GM18951 (cell line): ENCODE measurements at regions of chr5 and their contacts with region 1.

Region 1: DNA sequence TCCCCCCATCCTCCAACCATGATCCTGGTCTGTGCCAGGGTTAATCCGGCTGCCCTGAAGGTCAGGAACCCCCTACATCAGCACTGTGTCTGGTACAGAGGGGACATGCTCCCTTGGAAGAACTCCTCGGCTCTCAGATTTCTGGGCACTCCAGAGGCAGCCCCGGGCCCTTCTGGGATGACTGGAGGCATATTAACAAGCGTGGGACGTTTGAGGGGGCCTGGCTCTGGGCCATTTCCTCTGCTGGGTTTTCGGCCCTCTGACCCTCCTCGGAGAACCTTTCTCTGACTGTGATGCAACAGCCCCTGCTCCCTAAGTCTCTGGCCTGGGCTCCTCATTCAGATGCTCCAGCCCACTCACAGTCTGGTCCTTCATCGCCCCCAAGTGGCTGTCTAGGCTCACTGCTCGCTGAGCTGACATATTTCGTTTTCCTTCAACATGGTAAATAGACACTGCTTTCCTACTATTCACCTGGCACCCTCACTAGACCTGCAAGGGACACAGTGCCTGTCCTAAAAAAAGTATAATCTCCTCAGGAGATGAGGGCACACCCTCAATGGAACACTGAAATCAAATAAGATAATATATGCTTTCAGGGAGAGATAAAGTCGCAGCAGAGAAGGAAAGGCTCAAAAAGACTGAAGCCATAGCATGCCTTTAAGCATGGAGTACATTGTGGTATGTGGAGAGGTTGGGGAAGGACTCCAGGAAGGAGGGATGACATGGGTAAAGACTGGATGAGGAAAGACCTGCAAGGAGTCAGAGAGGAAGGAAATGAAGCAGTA is 404.7 kb upstream of the TRPC7 start:
- POLR2A ChIP-seq: no peak

Region 2: GRCh38 chr5:136249678-136250266 is 520.3 kb before region 1 on chr5:
- in situ Hi-C with region 1: loop called (anchors 25 kb)
- POLR2A ChIP-seq: no peak

Region 3: GRCh38 chr5:136605638-136606037 is 164.5 kb before region 1 on chr5:
- in situ Hi-C with region 1: no loop called
- POLR2A ChIP-seq: no peak